GM12878 (cell line): ENCODE measurements at regions of chr1 and their contacts with region 1.

Region 1: GRCh38 chr1:212070720-212071302 is 35.3 kb downstream of the DTL start:
- DNase-seq: no peak
- ATAC-seq: peak; percentile 63
- H3K4me3 ChIP-seq: no peak overlapping the region
- H3K27ac ChIP-seq: no peak overlapping the region
- H3K4me1 ChIP-seq: no peaks in the 10 kb centered on the region
- H3K27me3 ChIP-seq: no peaks in the 10 kb centered on the region
- CTCF ChIP-seq: peak; percentile 51 to 72 (median 54); a peak in 5 of 6 replicates
- EP300 ChIP-seq: no peak
- POLR2A ChIP-seq: no peak
- RAD21 ChIP-seq: peak; percentile 95

Region 2: GRCh38 chr1:211735208-211736170 is 335.3 kb before region 1 on chr1:
- CTCF ChIA-PET with region 1: no interaction called
- POLR2A ChIA-PET with region 1: no interaction called
- RAD21 ChIA-PET with region 1: no interaction called
- SMC1A ChIA-PET with region 1: no interaction called
- in situ Hi-C with region 1: no loop called
- intact Hi-C with region 1: no loop called
- DNase-seq: no peak
- ATAC-seq: no peak
- H3K4me3 ChIP-seq: no peak overlapping the region
- H3K27ac ChIP-seq: no peak overlapping the region
- H3K4me1 ChIP-seq: peaks cover 30% of the 10 kb centered on the region
- H3K27me3 ChIP-seq: no peaks in the 10 kb centered on the region
- CTCF ChIP-seq: no peak
- EP300 ChIP-seq: no peak
- POLR2A ChIP-seq: no peak
- RAD21 ChIP-seq: no peak

Region 3: DNA sequence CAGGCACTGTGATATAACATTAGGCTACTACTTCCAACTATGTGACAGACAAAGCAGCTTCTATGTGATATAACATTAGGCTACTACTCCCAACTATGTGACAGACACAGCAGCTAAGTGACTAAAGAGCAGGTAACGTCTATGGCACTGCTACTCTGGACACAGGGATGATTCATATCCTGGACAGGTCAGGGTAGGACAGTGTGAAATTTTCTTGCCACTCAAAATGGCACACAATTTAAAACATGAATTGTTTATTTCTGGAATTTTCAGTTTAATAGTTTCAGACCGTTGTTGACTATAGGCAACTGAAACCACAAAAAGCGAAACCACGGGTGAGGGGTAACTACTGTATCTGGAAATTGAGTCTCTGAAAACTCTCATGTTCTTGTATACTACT is 30.2 kb before region 1 on chr1:
- CTCF ChIA-PET with region 1: interaction called, 21 read pairs
- POLR2A ChIA-PET with region 1: interaction called, 4 read pairs
- RAD21 ChIA-PET with region 1: interaction called, 9 read pairs
- SMC1A ChIA-PET with region 1: interaction called, 14 read pairs
- in situ Hi-C with region 1: no loop called
- intact Hi-C with region 1: no loop called
- DNase-seq: no peak
- ATAC-seq: peak; percentile 46
- H3K4me3 ChIP-seq: peak overlapping the region; percentile 51
- H3K27ac ChIP-seq: peak overlapping the region; percentile 55; the same call in 1 of the 2 replicates
- H3K4me1 ChIP-seq: peaks cover 3% of the 10 kb centered on the region; the same call in 1 of the 2 replicates
- H3K27me3 ChIP-seq: no peaks in the 10 kb centered on the region
- CTCF ChIP-seq: no peak
- EP300 ChIP-seq: no peak
- POLR2A ChIP-seq: no peak
- RAD21 ChIP-seq: no peak

Region 4: GRCh38 chr1:212234431-212235395 is 163.9 kb after region 1 on chr1:
- CTCF ChIA-PET with region 1: interaction called, 6 read pairs
- POLR2A ChIA-PET with region 1: no interaction called
- RAD21 ChIA-PET with region 1: interaction called, 5 read pairs
- SMC1A ChIA-PET with region 1: interaction called, 11 read pairs
- in situ Hi-C with region 1: no loop called
- intact Hi-C with region 1: no loop called
- DNase-seq: no peak
- ATAC-seq: peak; percentile 77
- H3K4me3 ChIP-seq: no peak overlapping the region
- H3K27ac ChIP-seq: no peak overlapping the region
- H3K4me1 ChIP-seq: peaks cover 12% of the 10 kb centered on the region
- H3K27me3 ChIP-seq: no peaks in the 10 kb centered on the region
- CTCF ChIP-seq: no peak
- EP300 ChIP-seq: peak; percentile 13 to 24; a peak in 1 of 4 replicates
- POLR2A ChIP-seq: no peak
- RAD21 ChIP-seq: no peak

Region 5: DNA sequence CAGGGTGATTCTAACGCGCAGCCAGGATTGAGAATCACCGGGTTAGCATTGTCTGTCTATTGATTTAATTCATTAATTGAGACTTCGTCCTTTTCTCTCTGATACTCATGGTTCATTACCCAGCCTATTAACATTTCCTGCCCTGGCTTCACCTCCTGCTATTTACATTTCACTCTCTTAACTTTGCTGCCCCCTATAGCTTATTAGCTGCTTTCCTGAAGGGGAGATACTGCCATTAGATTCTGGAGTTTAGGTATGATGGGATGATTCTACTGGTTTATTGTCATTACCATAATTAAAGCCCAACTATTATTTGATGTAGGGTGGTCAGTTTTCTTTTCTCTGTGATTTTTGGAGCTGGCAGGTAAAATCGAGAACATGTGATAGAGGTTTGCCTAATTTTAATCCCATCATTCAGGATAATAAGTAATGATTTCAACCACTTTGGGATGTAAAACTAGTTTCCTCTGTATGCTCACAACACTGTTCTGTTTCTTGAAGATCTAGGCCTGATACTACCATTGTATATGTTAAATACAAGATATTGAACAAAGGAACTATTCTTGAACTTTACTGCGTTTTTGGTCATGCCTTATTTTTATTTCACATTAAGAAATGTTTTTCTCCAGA is 220.8 kb after region 1 on chr1:
- CTCF ChIA-PET with region 1: interaction called, 122 read pairs
- POLR2A ChIA-PET with region 1: interaction called, 3 read pairs
- RAD21 ChIA-PET with region 1: interaction called, 75 read pairs
- SMC1A ChIA-PET with region 1: interaction called, 130 read pairs
- in situ Hi-C with region 1: no loop called
- intact Hi-C with region 1: loop called (anchors 1 kb)
- DNase-seq: no peak
- ATAC-seq: peak; percentile 87
- H3K4me3 ChIP-seq: peak overlapping the region; percentile 54; the same call in 1 of the 2 replicates
- H3K27ac ChIP-seq: no peak overlapping the region
- H3K4me1 ChIP-seq: peaks cover 18% of the 10 kb centered on the region
- H3K27me3 ChIP-seq: no peaks in the 10 kb centered on the region
- CTCF ChIP-seq: peak; percentile 63 to 87 (median 76); a peak in 5 of 6 replicates
- EP300 ChIP-seq: no peak
- POLR2A ChIP-seq: no peak
- RAD21 ChIP-seq: peak; percentile 93

Region 6: DNA sequence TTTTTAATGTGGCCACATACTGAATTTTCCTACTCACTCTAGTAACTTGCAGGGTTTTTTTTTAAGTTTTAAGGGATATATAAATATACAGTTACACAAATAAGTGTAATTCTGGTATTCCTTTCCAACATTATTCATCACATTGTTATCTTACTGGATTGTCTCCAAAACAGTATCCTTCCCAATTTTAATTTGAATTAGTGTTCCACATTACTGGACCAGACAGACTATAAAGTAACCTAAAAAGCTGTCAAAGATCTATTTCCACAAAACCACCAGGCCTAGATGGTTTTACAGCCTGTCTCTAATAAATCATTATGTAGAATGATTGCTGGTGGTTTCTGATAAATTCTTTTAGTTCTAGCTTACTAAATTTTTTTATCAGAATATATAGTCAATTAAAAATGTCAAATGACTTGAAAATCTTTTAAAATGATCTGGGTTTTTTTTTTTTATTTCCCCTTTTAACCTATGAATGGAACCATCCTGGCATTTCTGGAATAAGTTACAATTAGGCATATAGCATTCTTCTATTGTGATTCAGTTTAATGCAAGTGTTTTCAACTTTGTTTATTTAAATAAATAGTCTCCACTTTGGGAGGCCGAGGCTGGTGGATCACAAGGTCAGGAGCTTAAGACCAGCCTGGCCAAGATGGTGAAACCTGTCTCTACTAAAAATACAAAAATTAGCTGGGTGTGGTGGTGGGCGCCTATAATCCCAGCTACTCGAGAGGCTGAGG is 284.6 kb after region 1 on chr1:
- CTCF ChIA-PET with region 1: interaction called, 14 read pairs
- POLR2A ChIA-PET with region 1: no interaction called
- RAD21 ChIA-PET with region 1: interaction called, 9 read pairs
- SMC1A ChIA-PET with region 1: interaction called, 13 read pairs
- in situ Hi-C with region 1: no loop called
- intact Hi-C with region 1: no loop called
- DNase-seq: no peak
- ATAC-seq: no peak
- H3K4me3 ChIP-seq: no peak overlapping the region
- H3K27ac ChIP-seq: no peak overlapping the region
- H3K4me1 ChIP-seq: no peaks in the 10 kb centered on the region
- H3K27me3 ChIP-seq: no peaks in the 10 kb centered on the region
- CTCF ChIP-seq: no peak
- EP300 ChIP-seq: no peak
- POLR2A ChIP-seq: no peak
- RAD21 ChIP-seq: no peak